GM13976 (cell line): ENCODE measurements at regions of chr1 and their contacts with region 1.

Region 1: GRCh38 chr1:66242646-66243547 is 291.1 kb upstream of the SGIP1 start:
- DNase-seq: peak; percentile 43
- CTCF ChIP-seq: peak; percentile 98

Region 2: GRCh38 chr1:65419681-65420589 is 823.0 kb before region 1 on chr1:
- in situ Hi-C with region 1: loop called (anchors 25 kb)
- DNase-seq: peak; percentile 99
- CTCF ChIP-seq: no peak

Region 3: DNA sequence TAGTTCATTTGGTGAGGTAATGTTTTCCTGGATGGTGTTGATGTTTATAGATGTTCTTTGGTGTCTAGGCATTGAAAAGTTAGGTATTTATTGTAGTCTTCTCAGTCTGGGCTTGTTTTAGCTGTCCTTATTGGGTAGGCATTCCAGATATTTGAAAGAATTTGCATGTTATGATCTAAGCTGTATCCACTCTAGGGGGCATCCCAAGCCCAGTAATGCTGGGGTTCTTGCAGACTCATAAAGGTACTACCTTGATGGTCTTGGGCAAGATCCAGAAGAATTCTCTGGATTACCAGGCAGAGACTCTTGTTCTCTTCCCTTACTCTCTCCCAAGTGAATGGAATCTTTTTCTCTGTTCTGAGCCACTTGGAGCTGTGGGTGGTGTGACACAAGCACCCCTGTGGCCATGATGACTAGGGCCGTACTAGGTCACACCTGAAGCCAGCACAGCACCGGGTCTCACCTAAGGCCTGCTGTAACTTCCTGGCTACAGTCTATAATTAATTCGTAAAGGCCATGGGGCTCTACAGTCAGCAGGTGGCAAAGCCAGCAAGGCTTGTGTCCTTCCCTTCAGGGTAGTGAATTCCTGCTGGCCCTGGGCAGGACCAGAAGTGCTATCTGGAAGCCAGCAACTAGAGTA is 525.0 kb before region 1 on chr1:
- in situ Hi-C with region 1: loop called (anchors 25 kb)
- DNase-seq: no peak
- CTCF ChIP-seq: no peak

Region 4: GRCh38 chr1:65952696-65953095 is 290.2 kb before region 1 on chr1:
- in situ Hi-C with region 1: loop called (anchors 5 kb)
- DNase-seq: no peak
- CTCF ChIP-seq: no peak

Region 5: GRCh38 chr1:66197785-66198184 is 45.1 kb before region 1 on chr1:
- in situ Hi-C with region 1: no loop called
- DNase-seq: no peak
- CTCF ChIP-seq: no peak